GM12878 (cell line): ENCODE measurements at regions of chr1 and their contacts with region 1.

Region 1: DNA sequence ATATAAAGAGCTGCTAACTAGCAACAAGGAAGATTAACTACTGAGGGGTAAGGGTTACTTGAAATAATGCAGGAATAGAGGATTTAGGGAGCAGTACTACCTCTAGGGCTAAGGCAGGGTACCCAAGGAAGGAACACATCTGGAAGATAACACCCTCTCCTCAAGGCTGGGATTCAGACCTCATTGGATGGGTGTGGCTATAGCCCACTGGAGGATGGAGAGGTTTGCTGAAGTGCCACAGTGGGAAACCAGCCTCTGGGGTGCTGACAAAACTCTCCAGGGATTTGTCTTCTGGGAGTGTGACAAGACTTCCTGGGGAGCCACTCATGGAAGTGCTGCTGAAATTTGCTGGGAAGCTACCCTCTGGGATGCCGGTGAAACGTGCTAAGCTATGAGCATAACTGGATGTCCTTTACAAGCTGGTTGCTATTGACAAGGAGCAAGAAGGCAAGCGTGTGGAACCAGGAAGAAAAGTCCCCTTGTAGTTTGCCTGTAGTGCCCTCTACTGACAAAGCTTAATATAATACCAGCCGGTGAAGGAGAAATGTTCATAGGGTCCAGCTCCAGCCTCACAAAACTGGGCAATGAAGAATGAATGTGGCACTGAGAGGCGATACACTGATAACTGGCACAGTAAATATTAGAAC is 122.8 kb upstream of the USP24 start:
- DNase-seq: peak; percentile 13
- ATAC-seq: peak; percentile 95
- H3K4me3 ChIP-seq: no peak overlapping the region
- H3K27ac ChIP-seq: no peak overlapping the region
- H3K4me1 ChIP-seq: no peaks in the 10 kb centered on the region
- H3K27me3 ChIP-seq: peaks cover 0 to 1% of the 10 kb centered on the region in 2 experiments; a peak in 1 of 4 replicates
- CTCF ChIP-seq: peak; percentile 57 to 62 (median 57)
- EP300 ChIP-seq: no peak
- POLR2A ChIP-seq: no peak
- RAD21 ChIP-seq: peak; percentile 69

Region 2: DNA sequence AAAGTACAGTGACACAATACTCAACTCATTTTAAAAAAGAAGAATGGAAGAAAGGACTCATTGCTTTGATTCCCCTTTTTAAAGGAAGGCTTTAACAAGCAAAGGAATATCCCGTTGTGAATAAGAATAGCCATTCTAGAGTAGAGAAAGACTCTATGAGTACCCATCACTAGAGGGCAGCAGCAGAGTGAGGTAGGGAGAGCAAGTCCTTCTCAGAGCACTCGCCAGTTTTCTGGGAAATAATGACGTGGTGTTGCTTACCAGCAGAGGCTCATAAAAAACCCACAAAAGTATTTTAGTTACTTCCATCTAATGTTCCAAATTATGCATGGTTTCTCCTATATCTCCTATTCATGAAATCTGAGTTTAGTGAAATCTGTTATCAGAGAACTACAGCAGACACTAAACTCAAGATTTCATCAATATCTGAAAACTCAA is 197.4 kb before region 1 on chr1:
- CTCF ChIA-PET with region 1: interaction called, 40 read pairs
- POLR2A ChIA-PET with region 1: no interaction called
- RAD21 ChIA-PET with region 1: interaction called, 4 read pairs
- SMC1A ChIA-PET with region 1: interaction called, 10 read pairs
- in situ Hi-C with region 1: no loop called
- intact Hi-C with region 1: loop called (anchors 1 kb)
- DNase-seq: peak; percentile 11
- ATAC-seq: peak; percentile 97
- H3K4me3 ChIP-seq: no peak overlapping the region
- H3K27ac ChIP-seq: no peak overlapping the region
- H3K4me1 ChIP-seq: no peaks in the 10 kb centered on the region
- H3K27me3 ChIP-seq: no peaks in the 10 kb centered on the region
- CTCF ChIP-seq: peak; percentile 70 to 84 (median 75)
- EP300 ChIP-seq: no peak
- POLR2A ChIP-seq: no peak
- RAD21 ChIP-seq: peak; percentile 94

Region 3: DNA sequence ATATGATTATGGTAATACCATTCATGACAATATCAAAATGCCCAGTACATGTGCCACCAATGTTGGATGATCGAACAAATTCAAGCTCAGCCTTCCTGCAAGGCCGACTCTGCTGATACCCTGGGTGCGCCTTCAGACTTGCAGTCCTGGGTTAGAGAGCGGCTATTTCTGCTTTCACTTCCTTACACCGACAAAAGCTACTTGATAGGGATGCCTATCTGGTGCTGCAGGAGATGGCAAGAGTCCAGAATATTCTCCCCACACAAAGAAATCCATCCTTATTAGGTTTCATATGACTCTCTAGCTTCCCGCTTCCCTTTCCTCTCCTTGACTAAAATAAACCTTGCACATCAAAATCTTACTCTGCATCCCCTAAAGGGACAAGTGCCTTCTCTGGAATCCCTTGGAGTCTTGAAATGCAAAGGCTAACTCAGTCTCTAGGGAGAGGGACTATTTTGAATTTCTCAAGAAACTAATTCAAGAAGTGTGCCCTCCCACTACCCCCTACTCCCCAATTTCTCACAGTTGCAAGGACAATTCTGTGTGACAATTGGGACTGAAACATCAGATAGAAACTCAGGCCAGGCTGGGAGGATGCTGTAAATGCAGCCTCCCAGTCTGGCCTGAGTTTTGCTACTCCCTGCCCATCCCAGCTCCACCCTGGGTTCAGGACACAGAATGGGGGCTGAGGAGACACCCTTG is 19.7 kb before region 1 on chr1:
- CTCF ChIA-PET with region 1: interaction called, 22 read pairs
- POLR2A ChIA-PET with region 1: no interaction called
- RAD21 ChIA-PET with region 1: interaction called, 4 read pairs
- SMC1A ChIA-PET with region 1: interaction called, 5 read pairs
- in situ Hi-C with region 1: no loop called
- intact Hi-C with region 1: no loop called
- DNase-seq: no peak
- ATAC-seq: peak; percentile 64
- H3K4me3 ChIP-seq: no peak overlapping the region
- H3K27ac ChIP-seq: no peak overlapping the region
- H3K4me1 ChIP-seq: no peaks in the 10 kb centered on the region
- H3K27me3 ChIP-seq: no peaks in the 10 kb centered on the region; a peak in 1 of 4 replicates
- CTCF ChIP-seq: no peak
- EP300 ChIP-seq: no peak
- POLR2A ChIP-seq: no peak
- RAD21 ChIP-seq: no peak

Region 4: GRCh38 chr1:55326496-55327243 is 11.3 kb before region 1 on chr1:
- CTCF ChIA-PET with region 1: interaction called, 15 read pairs
- POLR2A ChIA-PET with region 1: interaction called, 3 read pairs
- RAD21 ChIA-PET with region 1: no interaction called
- SMC1A ChIA-PET with region 1: interaction called, 5 read pairs
- in situ Hi-C with region 1: no loop called
- intact Hi-C with region 1: no loop called
- DNase-seq: no peak
- ATAC-seq: no peak
- H3K4me3 ChIP-seq: no peak overlapping the region
- H3K27ac ChIP-seq: no peak overlapping the region
- H3K4me1 ChIP-seq: no peaks in the 10 kb centered on the region
- H3K27me3 ChIP-seq: no peaks in the 10 kb centered on the region; a peak in 1 of 4 replicates
- CTCF ChIP-seq: no peak
- EP300 ChIP-seq: no peak
- POLR2A ChIP-seq: no peak
- RAD21 ChIP-seq: no peak